Heart right ventricle (tissue), 16 donors: ENCODE measurements at regions of chr15 and their contacts with region 1.

Region 1: DNA sequence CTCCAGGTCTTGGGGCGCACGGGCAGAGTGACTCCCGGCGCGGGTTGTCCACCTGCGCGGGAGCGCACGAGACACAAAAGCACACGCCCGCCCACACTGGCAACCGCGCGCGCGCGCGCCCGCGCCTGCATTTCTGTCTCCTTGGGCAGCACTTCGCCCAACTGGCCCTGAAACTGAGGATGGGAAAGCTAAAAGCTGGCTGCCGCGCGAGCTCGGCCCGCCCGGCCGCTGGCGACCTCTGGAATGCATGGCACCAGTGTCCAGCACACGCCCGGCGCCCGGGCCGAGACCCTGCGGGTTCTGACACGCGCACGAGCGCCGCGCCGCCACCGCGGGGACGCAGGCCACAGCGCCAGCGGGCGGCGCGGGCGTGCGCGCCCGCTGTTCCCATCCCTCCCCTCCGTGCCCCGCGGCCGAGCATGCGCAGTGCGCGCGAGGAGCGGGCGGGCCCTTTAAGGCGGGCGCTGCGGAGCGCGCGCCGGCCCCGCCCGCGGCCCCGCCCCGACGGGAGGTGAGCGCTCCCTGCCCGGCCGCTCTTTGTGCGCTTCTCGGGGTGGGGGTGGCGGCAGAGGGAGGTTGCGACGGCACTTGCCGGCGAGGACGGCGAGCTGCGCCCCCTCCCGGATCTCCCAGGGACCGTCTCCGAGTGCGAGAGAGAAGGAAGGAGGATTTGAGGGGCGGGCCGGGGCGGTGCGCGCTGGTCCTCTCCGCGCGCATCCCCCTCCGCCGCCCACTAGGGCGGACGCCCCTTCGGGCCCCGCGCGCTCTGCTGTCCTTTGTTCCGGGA is 1.0 kb upstream of the MEX3B start:
- DNase-seq: peak; percentile 91 to 94
- ATAC-seq: peak; percentile 71 to 91 (median 82)
- H3K4me3 ChIP-seq: peak overlapping the region; percentile 66 to 97 (median 90)
- H3K27ac ChIP-seq: peak overlapping the region; percentile 92 to 99 (median 98)
- H3K4me1 ChIP-seq: peaks cover 3 to 40% (median 28%) of the 10 kb centered on the region in 9 donors
- H3K27me3 ChIP-seq: peaks cover 0 to 28% (median 0%) of the 10 kb centered on the region in 7 donors
- CTCF ChIP-seq: peak; percentile 52 to 84 (median 73)

Region 2: DNA sequence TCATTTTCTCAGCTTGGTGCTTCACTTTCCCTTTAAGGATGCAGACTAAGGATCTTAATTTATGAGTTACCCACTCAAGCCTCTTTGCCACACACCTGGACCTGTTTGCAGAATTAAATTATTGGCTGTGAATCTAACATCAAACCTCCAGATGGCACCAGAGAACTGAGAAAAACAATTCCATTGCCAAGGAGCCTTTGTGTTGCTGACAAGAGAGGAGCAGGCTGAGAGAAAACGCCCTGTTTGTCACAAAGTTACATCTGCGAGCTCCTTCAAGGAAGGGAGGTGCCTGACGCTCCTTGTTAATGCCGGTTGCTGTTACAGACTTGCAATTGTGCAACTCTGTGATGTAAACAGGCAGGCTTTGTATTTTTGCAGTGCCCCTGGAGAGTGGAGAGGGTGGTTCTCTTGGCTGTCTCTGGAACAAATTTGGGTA is 636.5 kb before region 1 on chr15:
- intact Hi-C with region 1: loop called in 1 of 10 experiments (anchors 5 kb)
- DNase-seq: peak; percentile 18 to 29
- ATAC-seq: peak; percentile 61 to 96 (median 84)
- H3K4me3 ChIP-seq: no peak overlapping the region
- H3K27ac ChIP-seq: no peak overlapping the region
- H3K4me1 ChIP-seq: peaks cover 0 to 14% (median 8%) of the 10 kb centered on the region in 9 donors
- H3K27me3 ChIP-seq: no peaks in the 10 kb centered on the region
- CTCF ChIP-seq: peak in 8 of 9 donors; percentile 45 to 67 (median 57)

Region 3: GRCh38 chr15:81480645-81481053 is 566.2 kb before region 1 on chr15:
- intact Hi-C with region 1: loop called in 9 of 10 experiments (anchors 1 to 10 kb)
- DNase-seq: peak in 1 of 2 donors; percentile 70
- ATAC-seq: peak in 7 of 8 donors; percentile 64 to 74 (median 71)
- H3K4me3 ChIP-seq: peak overlapping the region in 1 of 10 donors; percentile 2
- H3K27ac ChIP-seq: no peak overlapping the region
- H3K4me1 ChIP-seq: peaks cover 0 to 5% (median 0%) of the 10 kb centered on the region in 9 donors
- H3K27me3 ChIP-seq: no peaks in the 10 kb centered on the region
- CTCF ChIP-seq: peak; percentile 80 to 97 (median 86)

Region 4: DNA sequence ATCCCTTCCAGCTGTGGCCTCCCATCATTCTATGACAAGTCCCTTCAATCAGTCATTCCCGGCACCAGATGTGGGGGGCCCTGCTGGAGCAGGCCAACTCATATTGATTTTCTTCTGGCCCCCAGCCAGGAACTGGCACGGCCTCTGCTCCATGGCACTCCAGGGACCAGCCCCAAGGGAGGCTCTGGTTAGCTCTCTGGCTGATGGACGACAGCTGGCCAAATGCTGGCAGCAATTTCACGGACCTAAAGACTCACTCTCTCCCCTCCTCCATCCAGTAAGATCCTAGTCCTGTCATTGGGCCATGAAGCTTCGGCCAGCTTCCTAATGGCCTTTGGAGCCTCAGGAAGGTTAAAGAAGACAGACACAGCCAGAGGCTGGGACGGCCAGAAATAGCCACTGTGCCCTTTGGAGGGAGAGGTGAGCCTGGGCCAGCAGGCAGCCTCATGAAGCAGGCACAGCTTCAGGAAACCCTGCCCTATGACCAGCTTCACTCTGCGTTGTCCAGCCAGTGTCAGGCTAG is 132.1 kb before region 1 on chr15:
- intact Hi-C with region 1: loop called in 3 of 10 experiments (anchors 10 kb)
- DNase-seq: peak; percentile 52 to 63
- ATAC-seq: peak; percentile 71 to 96 (median 88)
- H3K4me3 ChIP-seq: no peak overlapping the region
- H3K27ac ChIP-seq: peak overlapping the region; percentile 46 to 88 (median 75)
- H3K4me1 ChIP-seq: peaks cover 6 to 42% (median 32%) of the 10 kb centered on the region in 9 donors
- H3K27me3 ChIP-seq: no peaks in the 10 kb centered on the region
- CTCF ChIP-seq: no peak

Region 5: GRCh38 chr15:81950841-81951414 is 95.9 kb before region 1 on chr15:
- intact Hi-C with region 1: loop called in 1 of 10 experiments (anchors 10 kb)
- DNase-seq: no peak
- ATAC-seq: no peak
- H3K4me3 ChIP-seq: no peak overlapping the region
- H3K27ac ChIP-seq: no peak overlapping the region
- H3K4me1 ChIP-seq: peaks cover 0 to 9% (median 0%) of the 10 kb centered on the region in 9 donors
- H3K27me3 ChIP-seq: no peaks in the 10 kb centered on the region
- CTCF ChIP-seq: no peak

Region 6: GRCh38 chr15:82003916-82004315 is 42.9 kb before region 1 on chr15:
- intact Hi-C with region 1: no loop called
- DNase-seq: no peak
- ATAC-seq: no peak
- H3K4me3 ChIP-seq: no peak overlapping the region
- H3K27ac ChIP-seq: no peak overlapping the region
- H3K4me1 ChIP-seq: no peaks in the 10 kb centered on the region
- H3K27me3 ChIP-seq: no peaks in the 10 kb centered on the region
- CTCF ChIP-seq: no peak

Region 7: DNA sequence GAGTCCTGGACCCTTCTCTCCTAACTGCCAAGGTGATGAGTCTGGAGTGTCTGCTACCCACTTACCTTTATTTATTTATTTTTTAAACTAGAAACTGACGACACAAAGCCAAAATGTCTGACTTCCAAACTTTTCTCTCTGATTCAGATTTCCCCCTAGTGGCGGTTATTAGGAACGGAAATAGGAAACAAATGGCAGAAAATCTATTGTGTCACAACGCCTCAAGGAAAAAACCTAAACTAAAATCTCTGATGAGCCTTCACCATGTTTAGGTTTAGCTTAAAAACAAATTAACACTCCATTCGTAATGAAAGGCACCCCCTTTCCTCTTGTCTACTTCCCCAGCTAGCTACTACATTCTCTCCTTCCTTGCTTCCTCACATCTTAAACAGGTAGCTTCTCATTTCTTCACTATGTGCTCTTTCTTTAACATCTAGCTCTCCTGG is 93.0 kb after region 1 on chr15:
- intact Hi-C with region 1: loop called in 1 of 10 experiments (anchors 5 kb)
- DNase-seq: no peak
- ATAC-seq: peak in 1 of 8 donors; percentile 28
- H3K4me3 ChIP-seq: no peak overlapping the region
- H3K27ac ChIP-seq: no peak overlapping the region
- H3K4me1 ChIP-seq: peaks cover 0 to 14% (median 0%) of the 10 kb centered on the region in 9 donors
- H3K27me3 ChIP-seq: no peaks in the 10 kb centered on the region
- CTCF ChIP-seq: peak; percentile 56 to 81 (median 71)